Activated CD4-positive, alpha-beta T cell treated with anti-CD3 and anti-CD28 coated beads, Interleukin-2, amount 10 ng/mL, durations not matched to agents 7 days and 5 days (primary cell): ENCODE measurements at regions of chr10 and their contacts with region 1.

Region 1: GRCh38 chr10:101840741-101841453 is 2.7 kb downstream of the KCNIP2 start:
- DNase-seq: peak; percentile 75
- H3K4me3 Mint-ChIP-seq: peak overlapping the region; percentile 73
- H3K27ac Mint-ChIP-seq: no peak overlapping the region
- H3K4me1 Mint-ChIP-seq: peaks cover 50% of the 10 kb centered on the region
- H3K27me3 Mint-ChIP-seq: peaks cover 23% of the 10 kb centered on the region

Region 2: GRCh38 chr10:101611096-101611905 is 229.6 kb before region 1 on chr10:
- CTCF ChIA-PET with region 1: no interaction called
- POLR2A ChIA-PET with region 1: no interaction called
- DNase-seq: peak; percentile 12
- H3K4me3 Mint-ChIP-seq: no peak overlapping the region
- H3K27ac Mint-ChIP-seq: peak overlapping the region; percentile 84
- H3K4me1 Mint-ChIP-seq: peaks cover 8% of the 10 kb centered on the region
- H3K27me3 Mint-ChIP-seq: no peaks in the 10 kb centered on the region

Region 3: DNA sequence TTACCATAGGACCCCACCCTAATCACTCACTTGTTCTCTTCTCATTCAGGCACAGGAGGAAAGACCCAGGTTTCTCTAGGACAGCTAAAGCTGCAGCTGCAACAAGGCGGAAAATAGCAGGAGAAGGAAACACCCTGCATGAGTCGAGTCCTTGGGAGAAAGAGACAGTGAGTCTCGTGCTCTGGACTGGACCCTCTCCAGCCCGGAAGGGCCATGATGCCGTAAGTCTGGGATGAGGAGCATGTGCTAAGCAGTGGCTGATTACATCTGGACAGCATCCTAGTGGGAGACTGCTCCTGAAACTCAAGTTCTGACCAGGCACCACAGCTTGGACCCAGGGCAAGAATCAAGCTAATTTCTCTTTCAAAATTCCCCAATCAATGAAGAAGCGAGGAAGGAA is 185.3 kb before region 1 on chr10:
- CTCF ChIA-PET with region 1: no interaction called
- POLR2A ChIA-PET with region 1: no interaction called
- DNase-seq: no peak
- H3K4me3 Mint-ChIP-seq: no peak overlapping the region
- H3K27ac Mint-ChIP-seq: no peak overlapping the region
- H3K4me1 Mint-ChIP-seq: no peaks in the 10 kb centered on the region
- H3K27me3 Mint-ChIP-seq: no peaks in the 10 kb centered on the region

Region 4: GRCh38 chr10:101818119-101818871 is 22.6 kb before region 1 on chr10 and contains the start of gene OGA:
- CTCF ChIA-PET with region 1: interaction called, 18 read pairs
- POLR2A ChIA-PET with region 1: no interaction called
- DNase-seq: peak; percentile 99
- H3K4me3 Mint-ChIP-seq: peak within 1 kb of the TSS; percentile 100
- H3K27ac Mint-ChIP-seq: peak within 1 kb of the TSS; percentile 100
- H3K4me1 Mint-ChIP-seq: peaks cover 41% of the 10 kb centered on the region
- H3K27me3 Mint-ChIP-seq: no peaks in the 10 kb centered on the region
- total RNA-seq, gene OGA: 135 to 145 TPM

Region 5: DNA sequence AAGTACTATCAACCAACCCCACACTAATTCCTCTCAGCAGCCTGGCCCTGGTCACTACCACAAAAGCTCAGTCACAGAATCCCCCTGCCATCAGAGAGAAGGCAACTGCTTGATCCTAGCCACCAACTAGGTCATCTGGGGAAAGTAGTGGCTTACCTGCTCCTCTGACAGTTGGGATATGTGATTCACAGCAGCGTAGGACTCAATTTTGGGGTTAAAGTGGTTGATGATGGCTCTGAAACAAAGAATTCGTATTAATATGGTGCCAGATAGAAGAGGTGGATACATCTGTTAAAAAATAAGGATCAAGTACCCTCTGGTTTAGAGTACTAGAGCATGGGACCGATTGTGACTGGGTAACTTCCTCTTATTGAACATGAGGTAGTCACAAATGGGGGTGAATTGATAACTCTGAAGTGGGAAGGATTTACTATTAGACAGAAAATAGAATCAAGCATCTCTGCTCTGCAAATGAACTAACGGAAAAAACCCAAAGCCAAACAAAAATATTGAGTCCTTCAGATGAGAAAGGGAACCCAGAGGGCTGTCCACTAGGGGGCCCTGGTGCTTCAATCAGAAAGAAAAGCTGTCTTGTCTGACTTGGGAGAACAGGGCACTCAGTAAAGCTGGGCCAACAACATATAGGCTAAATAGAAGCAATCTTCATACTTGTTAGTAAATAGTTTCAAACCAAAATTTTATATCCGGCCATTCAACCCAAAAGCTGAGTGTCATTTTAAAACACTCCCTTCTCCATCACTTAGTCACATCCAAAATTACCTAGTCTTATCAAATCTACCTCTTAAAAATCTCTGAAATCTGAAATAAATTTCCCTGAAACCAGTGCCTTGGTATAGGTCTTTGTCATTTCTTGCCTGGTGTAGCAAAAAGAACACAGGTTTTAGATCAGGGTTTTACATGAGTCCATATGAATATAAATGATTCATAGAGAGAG is 48.6 kb after region 1 on chr10:
- CTCF ChIA-PET with region 1: interaction called, 20 read pairs
- POLR2A ChIA-PET with region 1: no interaction called
- DNase-seq: peak; percentile 82
- H3K4me3 Mint-ChIP-seq: no peak overlapping the region
- H3K27ac Mint-ChIP-seq: peak overlapping the region; percentile 70
- H3K4me1 Mint-ChIP-seq: peaks cover 6% of the 10 kb centered on the region
- H3K27me3 Mint-ChIP-seq: no peaks in the 10 kb centered on the region

Region 6: GRCh38 chr10:102016416-102016815 is 175.5 kb after region 1 on chr10:
- CTCF ChIA-PET with region 1: interaction called, 17 read pairs
- POLR2A ChIA-PET with region 1: no interaction called
- DNase-seq: no peak
- H3K4me3 Mint-ChIP-seq: no peak overlapping the region
- H3K27ac Mint-ChIP-seq: no peak overlapping the region
- H3K4me1 Mint-ChIP-seq: peaks cover 2% of the 10 kb centered on the region
- H3K27me3 Mint-ChIP-seq: no peaks in the 10 kb centered on the region

Region 7: DNA sequence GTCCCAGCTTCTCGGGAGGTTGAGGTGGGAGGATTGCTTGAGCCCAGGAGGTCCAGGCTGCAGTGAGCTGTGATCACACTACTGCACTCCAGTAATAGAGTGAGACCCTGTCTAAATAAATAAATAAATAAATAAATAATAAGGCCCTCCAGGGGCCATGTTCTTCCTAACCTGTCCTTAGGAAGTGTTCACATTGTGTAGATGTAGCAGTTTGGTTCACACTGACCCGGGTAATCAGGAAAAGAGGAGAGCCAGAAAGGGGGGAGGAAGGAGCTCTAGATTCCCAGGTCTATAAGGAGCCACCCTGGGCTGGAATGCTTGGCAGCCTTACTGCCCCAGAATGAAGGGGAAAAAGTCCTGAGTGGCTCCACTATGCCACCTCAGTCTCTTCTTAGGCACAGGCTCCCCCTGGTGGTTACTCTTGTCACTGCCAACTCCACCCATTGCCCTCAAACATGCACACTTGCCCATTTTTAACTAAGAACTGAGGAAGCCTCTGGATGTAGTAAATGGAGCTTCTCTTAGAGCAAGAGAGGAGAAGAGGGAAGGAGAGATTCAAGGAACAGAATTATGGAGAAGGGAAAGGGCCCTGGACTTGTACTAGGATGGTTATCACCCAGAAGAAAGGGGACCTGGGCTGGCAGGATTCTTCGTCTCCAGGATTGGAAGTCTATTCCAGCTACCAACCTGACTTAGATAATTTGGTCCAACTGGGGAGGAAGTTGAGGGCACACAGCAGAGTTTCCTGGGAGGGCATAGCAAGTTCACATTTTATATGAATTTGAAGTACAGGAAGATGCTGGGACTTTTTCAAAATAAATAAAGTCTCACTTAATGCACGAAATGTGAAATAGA is 232.0 kb after region 1 on chr10:
- CTCF ChIA-PET with region 1: interaction called, 25 read pairs
- POLR2A ChIA-PET with region 1: no interaction called
- DNase-seq: peak; percentile 86
- H3K4me3 Mint-ChIP-seq: no peak overlapping the region
- H3K27ac Mint-ChIP-seq: no peak overlapping the region
- H3K4me1 Mint-ChIP-seq: peaks cover 1% of the 10 kb centered on the region
- H3K27me3 Mint-ChIP-seq: no peaks in the 10 kb centered on the region